ENCODE measurements at regions of chr2 and their contacts with region 1.

Region 1: DNA sequence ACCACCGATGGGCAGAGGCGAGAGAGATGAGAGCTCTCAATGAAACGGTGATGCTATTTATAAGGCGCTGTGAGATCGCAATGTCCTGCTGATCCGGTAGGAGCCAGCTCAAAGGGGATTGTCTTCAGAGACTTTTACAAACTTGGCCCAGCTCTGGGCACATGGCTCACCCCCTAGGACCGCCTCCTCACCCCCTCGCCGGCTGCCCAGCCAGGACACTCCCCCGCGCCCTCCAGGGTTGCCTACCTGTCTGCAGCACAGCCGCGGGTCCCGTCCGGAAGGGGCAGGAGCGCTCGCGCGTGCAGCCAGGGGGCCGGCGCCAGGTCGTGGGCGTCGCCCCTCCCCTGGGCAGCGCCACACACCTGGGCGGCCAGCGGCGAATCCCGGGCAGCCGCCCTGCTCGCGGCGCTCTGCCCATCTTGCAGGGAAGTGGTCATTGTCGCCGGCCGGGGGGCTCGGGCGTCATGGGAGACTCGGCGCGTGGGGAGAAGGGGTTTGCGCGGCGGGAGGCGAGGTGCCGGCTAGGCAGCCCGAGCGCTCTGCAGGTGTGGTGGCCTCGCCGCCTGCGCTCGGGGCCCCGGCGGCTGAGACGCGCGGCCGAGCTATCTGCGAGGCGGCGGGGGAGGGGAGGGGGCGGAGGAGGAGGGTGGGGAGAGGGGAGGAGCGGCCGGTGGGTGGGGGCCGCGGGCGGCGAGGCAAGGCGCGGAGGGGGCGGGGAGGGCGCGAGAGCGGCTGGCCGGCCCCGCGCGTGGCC is at the start of gene GRB14:
- DNase-seq: peak; percentile 84
- H3K4me3 ChIP-seq: peak within 1 kb of the TSS; percentile 71 to 87 (median 78)
- H3K27ac ChIP-seq: peak within 1 kb of the TSS; percentile 65
- H3K4me1 ChIP-seq: peaks cover 23% of the 10 kb centered on the region
- H3K27me3 ChIP-seq: no peaks in the 10 kb centered on the region
- CTCF ChIP-seq: peak in 1 of 2 donors; percentile 30
- total RNA-seq, gene GRB14: 7.3 to 9.8 TPM

Region 2: DNA sequence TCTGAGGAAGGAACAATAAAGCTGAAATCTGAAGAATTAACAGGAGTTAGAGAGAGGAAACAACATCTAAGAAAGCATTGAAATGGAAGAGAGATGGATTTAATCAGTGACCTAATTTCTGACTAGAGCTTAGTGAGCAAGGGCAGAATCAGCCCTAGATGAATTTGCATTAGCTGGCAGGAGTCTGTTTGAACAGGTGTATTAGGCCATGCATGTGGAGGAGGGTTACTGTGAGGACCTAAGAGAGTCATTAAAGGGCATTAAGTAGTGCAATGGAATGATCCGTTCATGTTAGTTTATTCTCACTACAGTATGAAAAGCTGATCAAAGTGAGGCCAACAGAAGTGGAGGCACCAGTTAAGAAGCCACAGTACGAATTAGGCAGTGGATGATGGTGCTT is 285.1 kb before region 1 on chr2:
- CTCF ChIA-PET with region 1: no interaction called
- dilution Hi-C with region 1: no loop called
- in situ Hi-C with region 1: no loop called
- intact Hi-C with region 1: no loop called
- DNase-seq: no peak
- H3K4me3 ChIP-seq: no peak overlapping the region
- H3K27ac ChIP-seq: no peak overlapping the region
- H3K4me1 ChIP-seq: no peaks in the 10 kb centered on the region
- H3K27me3 ChIP-seq: no peaks in the 10 kb centered on the region
- CTCF ChIP-seq: no peak

Region 3: GRCh38 chr2:164430166-164430783 is 190.8 kb before region 1 on chr2:
- CTCF ChIA-PET with region 1: no interaction called
- dilution Hi-C with region 1: no loop called
- in situ Hi-C with region 1: no loop called
- intact Hi-C with region 1: no loop called
- DNase-seq: peak; percentile 14
- H3K4me3 ChIP-seq: no peak overlapping the region
- H3K27ac ChIP-seq: no peak overlapping the region
- H3K4me1 ChIP-seq: no peaks in the 10 kb centered on the region
- H3K27me3 ChIP-seq: peaks cover 3% of the 10 kb centered on the region
- CTCF ChIP-seq: peak; percentile 74 to 75

Region 4: GRCh38 chr2:164657129-164657528 is 36.1 kb after region 1 on chr2:
- CTCF ChIA-PET with region 1: no interaction called
- dilution Hi-C with region 1: no loop called
- in situ Hi-C with region 1: no loop called
- intact Hi-C with region 1: loop called (anchors 5 kb)
- DNase-seq: peak; percentile 97
- H3K4me3 ChIP-seq: no peak overlapping the region
- H3K27ac ChIP-seq: peak overlapping the region; percentile 83
- H3K4me1 ChIP-seq: peaks cover 32% of the 10 kb centered on the region
- H3K27me3 ChIP-seq: no peaks in the 10 kb centered on the region
- CTCF ChIP-seq: no peak

Region 5: GRCh38 chr2:164717000-164717803 is 96.2 kb after region 1 on chr2:
- CTCF ChIA-PET with region 1: no interaction called
- dilution Hi-C with region 1: no loop called
- in situ Hi-C with region 1: no loop called
- intact Hi-C with region 1: loop called (anchors 10 kb)
- DNase-seq: no peak
- H3K4me3 ChIP-seq: no peak overlapping the region
- H3K27ac ChIP-seq: no peak overlapping the region
- H3K4me1 ChIP-seq: peaks cover 19% of the 10 kb centered on the region
- H3K27me3 ChIP-seq: no peaks in the 10 kb centered on the region
- CTCF ChIP-seq: peak; percentile 45 to 59